ENCODE measurements at regions of chr11 and their contacts with region 1.

Region 1: GRCh38 chr11:3781423-3781822 is 15.9 kb downstream of the NUP98 start:
- DNase-seq: no peak
- H3K4me3 Mint-ChIP-seq: no peak overlapping the region
- H3K27ac Mint-ChIP-seq: peak overlapping the region; percentile 64
- H3K4me1 Mint-ChIP-seq: peaks cover 45% of the 10 kb centered on the region
- H3K27me3 Mint-ChIP-seq: no peaks in the 10 kb centered on the region

Region 2: DNA sequence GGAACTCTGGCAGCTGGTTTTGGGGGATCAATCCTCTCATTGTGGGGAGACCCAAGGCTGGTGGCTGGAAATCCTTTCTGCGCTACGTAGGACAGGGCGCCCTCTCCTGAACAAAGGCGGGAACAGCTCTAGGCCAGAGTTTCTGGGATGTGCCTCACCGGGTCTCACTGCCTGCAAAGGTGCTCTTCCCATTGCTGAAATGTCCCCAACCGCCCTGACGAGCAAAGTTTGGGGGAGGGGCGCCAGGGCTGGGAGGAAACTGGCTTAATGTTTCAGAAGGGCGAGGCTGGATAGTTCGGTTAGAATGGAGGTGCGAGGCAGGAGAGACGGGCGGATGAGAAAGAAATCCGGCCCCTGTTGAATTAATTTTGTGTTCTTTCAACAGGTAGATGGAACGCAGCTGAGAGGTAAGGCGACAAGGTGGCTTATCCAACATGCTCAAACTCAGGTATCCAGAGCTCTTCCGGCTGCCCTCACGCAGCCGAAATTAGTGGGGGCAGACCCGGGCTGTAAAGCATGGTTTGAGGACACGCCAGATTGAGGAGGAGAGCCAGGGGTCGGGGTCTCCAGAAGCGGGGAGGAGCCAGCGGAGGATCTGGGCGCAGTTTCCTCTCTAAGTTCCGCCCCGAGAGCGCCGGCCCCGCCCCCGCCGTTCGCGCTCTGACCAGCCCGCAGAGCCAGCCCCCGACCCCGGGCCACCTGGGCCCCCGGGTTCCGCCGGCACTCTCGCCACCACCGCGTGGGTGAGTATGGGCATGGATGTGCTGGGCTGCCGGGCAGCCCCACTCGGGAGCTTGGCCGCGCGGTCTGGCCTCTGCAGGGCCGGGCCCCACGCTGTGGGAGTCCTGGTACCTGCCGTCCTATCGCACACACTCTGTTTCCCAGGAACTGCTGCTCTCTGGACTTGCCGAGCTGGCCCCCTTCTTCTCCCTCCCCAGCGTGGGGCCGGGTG is 26.8 kb after region 1 on chr11 and contains the start of gene PGAP2:
- intact Hi-C with region 1: loop called (anchors 1 kb)
- DNase-seq: peak; percentile 53
- H3K4me3 Mint-ChIP-seq: peak within 1 kb of the TSS; percentile 96
- H3K27ac Mint-ChIP-seq: peak within 1 kb of the TSS; percentile 88
- H3K4me1 Mint-ChIP-seq: peaks cover 22% of the 10 kb centered on the region
- H3K27me3 Mint-ChIP-seq: no peaks in the 10 kb centered on the region
- total RNA-seq, gene PGAP2: 23.8 and 30.3 TPM in 2 replicates

Measured in activated T-helper 2 cell treated with anti-CD3 and anti-CD28 coated beads, Interferon-gamma antibody, Interleukin-2, Interleukin-4, amounts not matched to agents 10 μg/mL and 5 μg/mL and 100 μg/mL, durations not matched to agents 14 hours and 24 hours and 36 hours (primary cell).